CD14-positive monocyte (primary cell): ENCODE measurements at regions of chr2 and their contacts with region 1.

Region 1: GRCh38 chr2:102020596-102021181 is 28.9 kb downstream of the IL1R2 start:
- DNase-seq: peak; percentile 82 to 88 (median 87)
- H3K4me3 ChIP-seq: no peak overlapping the region
- H3K4me3 Mint-ChIP-seq: no peak overlapping the region
- H3K27ac ChIP-seq: no peak overlapping the region
- H3K27ac Mint-ChIP-seq: peak overlapping the region in 5 of 7 donors; percentile 43 to 81 (median 63)
- H3K4me1 ChIP-seq: peaks cover 13 to 20% of the 10 kb centered on the region in 2 donors
- H3K4me1 Mint-ChIP-seq: peaks cover 20% of the 10 kb centered on the region
- H3K27me3 ChIP-seq: no peaks in the 10 kb centered on the region
- H3K27me3 Mint-ChIP-seq: peaks cover 0 to 6% (median 3%) of the 10 kb centered on the region in 3 donors
- CTCF ChIP-seq: peak; percentile 98

Region 2: DNA sequence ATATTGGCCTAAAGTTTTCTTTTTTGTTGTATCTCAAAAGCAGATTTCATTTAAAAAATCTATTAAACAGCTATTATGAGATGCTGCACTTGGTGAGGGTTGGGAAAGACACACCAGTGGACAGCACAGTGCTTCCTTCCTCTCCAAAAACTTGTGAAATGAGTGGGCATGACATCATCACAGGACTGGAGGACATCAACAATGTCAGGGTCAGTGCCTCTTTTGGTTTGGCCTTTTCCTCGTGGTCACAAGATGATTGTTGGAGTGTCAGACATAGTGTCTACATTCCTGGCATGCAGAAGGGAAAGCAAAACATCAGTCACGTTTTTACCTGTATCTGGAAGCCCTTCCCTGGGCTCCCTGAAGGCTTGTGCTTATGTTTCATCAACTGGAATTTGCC is 20.7 kb after region 1 on chr2:
- intact Hi-C with region 1: loop called in 1 of 2 experiments (anchors 1 kb)
- DNase-seq: peak; percentile 90 to 93 (median 91)
- H3K4me3 ChIP-seq: peak overlapping the region in 1 of 3 experiments; percentile 26
- H3K4me3 Mint-ChIP-seq: peak overlapping the region in 1 of 2 donors; percentile 71
- H3K27ac ChIP-seq: peak overlapping the region; percentile 74 to 85
- H3K27ac Mint-ChIP-seq: peak overlapping the region; percentile 86 to 95 (median 90)
- H3K4me1 ChIP-seq: peaks cover 42 to 48% of the 10 kb centered on the region in 2 donors
- H3K4me1 Mint-ChIP-seq: peaks cover 66% of the 10 kb centered on the region
- H3K27me3 ChIP-seq: no peaks in the 10 kb centered on the region
- H3K27me3 Mint-ChIP-seq: peaks cover 2 to 13% (median 11%) of the 10 kb centered on the region in 3 donors
- CTCF ChIP-seq: no peak

Region 3: DNA sequence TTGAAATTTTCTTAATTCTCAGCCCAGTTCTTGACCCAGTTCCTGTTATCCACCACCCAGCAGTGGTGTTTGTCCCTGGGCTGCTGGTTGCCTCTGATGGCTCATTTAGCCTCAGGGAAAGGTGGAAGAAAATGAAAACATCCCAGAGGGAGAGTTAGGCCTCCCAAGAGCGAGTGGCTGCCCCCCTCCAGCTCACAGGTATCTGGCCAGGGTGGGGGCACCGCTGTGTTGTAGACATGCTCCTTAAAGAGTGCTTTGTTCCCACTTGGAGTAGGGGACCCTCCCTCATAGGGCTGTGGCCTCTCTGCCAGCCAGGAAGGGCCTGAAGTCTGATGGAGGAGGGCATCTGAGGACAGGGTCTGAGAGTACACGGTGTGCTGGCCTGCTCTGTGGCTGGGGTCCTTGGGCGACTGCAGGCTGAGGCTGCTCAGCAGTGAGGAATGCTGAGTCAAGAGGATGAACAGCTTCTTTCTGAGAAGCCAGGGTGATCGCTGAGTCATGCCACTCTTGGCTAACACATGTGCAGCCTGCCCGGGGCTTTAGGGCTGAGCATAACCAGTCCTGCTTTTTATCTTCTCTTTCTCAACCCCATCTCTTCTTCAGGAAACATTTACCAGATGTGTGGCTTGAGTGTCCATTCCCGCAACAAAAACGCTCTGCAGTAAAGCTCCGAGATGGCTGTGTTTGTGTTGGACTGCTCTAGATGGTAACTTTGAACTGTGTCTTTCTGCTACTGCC is 43.4 kb after region 1 on chr2:
- intact Hi-C with region 1: loop called in 1 of 2 experiments (anchors 5 kb)
- DNase-seq: peak; percentile 76 to 88 (median 86)
- H3K4me3 ChIP-seq: peak overlapping the region in 2 of 3 experiments; percentile 5 to 67
- H3K4me3 Mint-ChIP-seq: peak overlapping the region; percentile 66 to 77
- H3K27ac ChIP-seq: peak overlapping the region; percentile 92 to 94
- H3K27ac Mint-ChIP-seq: peak overlapping the region; percentile 93 to 99 (median 98)
- H3K4me1 ChIP-seq: peaks cover 34 to 44% of the 10 kb centered on the region in 2 donors
- H3K4me1 Mint-ChIP-seq: peaks cover 41% of the 10 kb centered on the region
- H3K27me3 ChIP-seq: no peaks in the 10 kb centered on the region
- H3K27me3 Mint-ChIP-seq: peaks cover 3 to 5% (median 4%) of the 10 kb centered on the region in 3 donors
- CTCF ChIP-seq: no peak

Region 4: GRCh38 chr2:102082571-102083392 is 62.1 kb after region 1 on chr2:
- intact Hi-C with region 1: loop called in 1 of 2 experiments (anchors 5 kb)
- DNase-seq: peak; percentile 90 to 94 (median 91)
- H3K4me3 ChIP-seq: peak overlapping the region in 2 of 3 experiments; percentile 36 to 64
- H3K4me3 Mint-ChIP-seq: peak overlapping the region; percentile 58 to 89
- H3K27ac ChIP-seq: peak overlapping the region; percentile 67 to 94
- H3K27ac Mint-ChIP-seq: peak overlapping the region; percentile 94 to 100 (median 98)
- H3K4me1 ChIP-seq: peaks cover 34 to 44% of the 10 kb centered on the region in 2 donors
- H3K4me1 Mint-ChIP-seq: peaks cover 39% of the 10 kb centered on the region
- H3K27me3 ChIP-seq: no peaks in the 10 kb centered on the region
- H3K27me3 Mint-ChIP-seq: peaks cover 1 to 8% (median 2%) of the 10 kb centered on the region in 3 donors
- CTCF ChIP-seq: no peak

Region 5: DNA sequence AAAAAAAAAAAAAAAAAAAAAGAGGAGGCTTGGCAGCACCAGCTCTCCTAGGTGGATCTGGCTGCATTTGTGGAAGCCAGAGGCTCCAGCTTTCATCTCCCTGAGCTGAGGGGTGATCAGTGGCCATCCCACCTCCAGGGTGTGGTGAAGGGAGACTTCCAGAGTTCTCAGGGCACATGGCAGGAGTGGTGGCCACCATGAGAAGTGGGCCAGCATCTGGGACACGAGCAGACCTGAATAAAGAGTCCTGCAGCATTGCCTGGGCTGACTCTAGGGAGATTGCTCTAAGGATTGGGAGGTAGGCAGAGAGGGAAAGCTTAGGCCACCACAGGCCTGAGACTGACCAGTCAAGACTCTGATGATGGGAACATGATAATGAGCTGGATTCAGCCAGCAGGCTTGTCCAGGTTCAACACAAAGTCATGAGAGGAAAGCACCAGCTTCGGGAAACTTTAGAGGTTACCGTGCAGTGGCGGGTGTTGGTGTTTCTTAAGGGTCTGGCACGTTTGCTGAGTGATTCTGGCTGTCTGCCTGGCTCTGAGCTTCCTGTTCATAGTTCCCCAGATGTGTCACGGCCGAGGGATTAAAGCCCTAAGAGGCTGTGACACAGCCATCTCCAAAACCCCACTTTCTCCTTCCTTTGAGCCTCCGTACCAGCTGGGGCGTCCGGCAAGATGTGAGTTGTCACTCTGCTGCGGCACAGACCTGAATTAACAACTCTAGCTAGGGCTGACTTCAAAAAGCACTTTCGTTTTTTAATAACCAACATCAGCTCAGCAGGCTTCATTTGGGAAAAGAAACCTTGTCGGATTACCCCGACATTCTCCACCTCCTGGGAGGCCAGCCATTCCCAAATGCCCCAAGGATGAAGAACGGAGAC is 83.5 kb after region 1 on chr2:
- intact Hi-C with region 1: loop called in 1 of 2 experiments (anchors 5 kb)
- DNase-seq: peak; percentile 86 to 96 (median 93)
- H3K4me3 ChIP-seq: peak overlapping the region; percentile 16 to 57 (median 40)
- H3K4me3 Mint-ChIP-seq: peak overlapping the region; percentile 80 to 95
- H3K27ac ChIP-seq: peak overlapping the region in 1 of 2 donors; percentile 39
- H3K27ac Mint-ChIP-seq: peak overlapping the region; percentile 72 to 92 (median 83)
- H3K4me1 ChIP-seq: peaks cover 11 to 13% of the 10 kb centered on the region in 2 donors
- H3K4me1 Mint-ChIP-seq: peaks cover 19% of the 10 kb centered on the region
- H3K27me3 ChIP-seq: no peaks in the 10 kb centered on the region
- H3K27me3 Mint-ChIP-seq: peaks cover 3 to 10% (median 9%) of the 10 kb centered on the region in 3 donors
- CTCF ChIP-seq: no peak

Region 6: DNA sequence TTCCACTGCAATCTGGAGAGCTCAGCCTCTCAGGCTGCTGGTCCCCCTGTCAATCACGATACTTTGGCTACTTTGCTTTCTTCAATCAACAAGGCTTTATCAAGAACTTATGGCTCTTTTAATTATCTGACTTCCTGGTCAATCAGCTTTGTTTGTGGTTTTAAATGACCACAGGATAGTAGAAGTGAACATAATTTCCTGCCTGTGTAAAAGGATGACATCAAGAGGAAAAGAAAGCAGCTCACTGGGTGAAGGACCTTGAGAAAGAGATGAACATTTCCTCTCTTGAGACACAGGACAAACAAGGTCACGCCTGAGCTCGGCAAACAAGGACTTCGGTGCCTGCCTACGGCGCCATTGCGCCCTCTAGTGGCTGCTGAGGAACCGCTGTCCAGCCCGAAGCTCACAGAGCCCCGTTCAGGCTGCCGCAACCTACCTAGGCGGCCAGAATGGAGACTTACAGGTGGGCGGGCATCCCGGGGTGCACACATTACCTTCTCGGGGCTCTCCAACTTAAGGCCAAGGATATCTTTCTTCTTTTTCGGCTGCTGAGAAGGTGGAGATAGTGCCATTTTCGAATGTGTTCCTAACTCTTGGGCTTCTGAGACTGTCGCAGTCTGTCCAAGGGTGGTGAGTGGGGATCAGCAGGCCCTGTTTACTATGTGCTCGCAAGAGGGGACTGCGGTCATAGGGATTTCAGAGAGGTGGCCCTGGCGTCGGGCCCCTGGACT is 220.1 kb after region 1 on chr2:
- intact Hi-C with region 1: loop called (anchors 2 to 5 kb)
- DNase-seq: peak; percentile 96 to 99 (median 98)
- H3K4me3 ChIP-seq: peak overlapping the region in 1 of 3 experiments; percentile 43
- H3K4me3 Mint-ChIP-seq: peak overlapping the region in 1 of 2 donors; percentile 67
- H3K27ac ChIP-seq: peak overlapping the region; percentile 18 to 66
- H3K27ac Mint-ChIP-seq: peak overlapping the region; percentile 72 to 95 (median 90)
- H3K4me1 ChIP-seq: peaks cover 21 to 31% of the 10 kb centered on the region in 2 donors
- H3K4me1 Mint-ChIP-seq: peaks cover 42% of the 10 kb centered on the region
- H3K27me3 ChIP-seq: peaks cover 6 to 24% of the 10 kb centered on the region in 2 donors
- H3K27me3 Mint-ChIP-seq: peaks cover 41 to 63% (median 55%) of the 10 kb centered on the region in 3 donors
- CTCF ChIP-seq: peak; percentile 93

Region 7: DNA sequence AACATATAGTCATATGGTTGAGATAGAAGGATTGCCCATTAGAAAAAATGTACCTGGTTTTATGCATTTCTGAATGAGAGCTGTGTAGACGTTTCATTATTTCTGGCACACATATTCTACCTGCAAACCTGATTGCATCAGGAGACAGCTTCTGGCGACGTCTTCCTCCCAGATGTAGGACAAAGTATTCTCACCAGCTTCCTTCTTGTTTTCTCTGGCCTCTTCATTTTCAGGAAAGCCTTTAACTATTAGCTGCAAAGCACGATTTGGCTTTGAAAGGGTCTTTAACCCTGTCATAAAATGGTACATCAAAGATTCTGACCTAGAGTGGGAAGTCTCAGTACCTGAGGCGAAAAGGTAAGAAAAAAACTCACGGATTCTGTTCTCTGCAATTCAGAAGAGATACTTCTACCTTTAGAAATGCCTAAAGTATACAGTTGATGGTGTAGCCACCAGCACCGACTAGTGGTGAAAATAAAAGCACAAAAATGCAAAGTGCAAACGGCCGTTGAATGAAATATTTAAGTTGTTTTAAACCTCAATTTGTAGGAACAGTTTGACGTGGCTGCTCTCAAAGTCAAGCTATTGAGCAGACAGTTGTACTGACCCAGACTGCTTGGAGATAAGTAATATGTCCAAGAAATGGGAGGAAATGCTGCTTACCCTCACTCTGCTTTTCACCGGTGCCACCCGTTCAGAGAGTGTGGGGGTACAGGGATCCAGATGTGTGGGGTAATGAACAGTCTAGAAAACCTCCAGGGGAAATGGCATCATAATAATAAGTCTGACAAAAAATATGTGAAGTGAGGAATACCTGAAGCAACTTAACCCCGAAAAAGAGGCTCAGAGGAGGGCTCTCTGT is 422.5 kb after region 1 on chr2:
- intact Hi-C with region 1: loop called in 1 of 2 experiments (anchors 5 kb)
- DNase-seq: peak; percentile 18 to 48 (median 29)
- H3K4me3 ChIP-seq: no peak overlapping the region
- H3K4me3 Mint-ChIP-seq: peak overlapping the region in 1 of 2 donors; percentile 51
- H3K27ac ChIP-seq: no peak overlapping the region
- H3K27ac Mint-ChIP-seq: no peak overlapping the region
- H3K4me1 ChIP-seq: peaks cover 4 to 6% of the 10 kb centered on the region in 2 donors
- H3K4me1 Mint-ChIP-seq: peaks cover 5% of the 10 kb centered on the region
- H3K27me3 ChIP-seq: peaks cover 0 to 3% of the 10 kb centered on the region in 2 donors
- H3K27me3 Mint-ChIP-seq: peaks cover 0 to 3% (median 1%) of the 10 kb centered on the region in 3 donors
- CTCF ChIP-seq: peak; percentile 82